CD8-positive, alpha-beta memory T cell (primary cell): ENCODE measurements at regions of chr1 and their contacts with region 1.

Region 1: DNA sequence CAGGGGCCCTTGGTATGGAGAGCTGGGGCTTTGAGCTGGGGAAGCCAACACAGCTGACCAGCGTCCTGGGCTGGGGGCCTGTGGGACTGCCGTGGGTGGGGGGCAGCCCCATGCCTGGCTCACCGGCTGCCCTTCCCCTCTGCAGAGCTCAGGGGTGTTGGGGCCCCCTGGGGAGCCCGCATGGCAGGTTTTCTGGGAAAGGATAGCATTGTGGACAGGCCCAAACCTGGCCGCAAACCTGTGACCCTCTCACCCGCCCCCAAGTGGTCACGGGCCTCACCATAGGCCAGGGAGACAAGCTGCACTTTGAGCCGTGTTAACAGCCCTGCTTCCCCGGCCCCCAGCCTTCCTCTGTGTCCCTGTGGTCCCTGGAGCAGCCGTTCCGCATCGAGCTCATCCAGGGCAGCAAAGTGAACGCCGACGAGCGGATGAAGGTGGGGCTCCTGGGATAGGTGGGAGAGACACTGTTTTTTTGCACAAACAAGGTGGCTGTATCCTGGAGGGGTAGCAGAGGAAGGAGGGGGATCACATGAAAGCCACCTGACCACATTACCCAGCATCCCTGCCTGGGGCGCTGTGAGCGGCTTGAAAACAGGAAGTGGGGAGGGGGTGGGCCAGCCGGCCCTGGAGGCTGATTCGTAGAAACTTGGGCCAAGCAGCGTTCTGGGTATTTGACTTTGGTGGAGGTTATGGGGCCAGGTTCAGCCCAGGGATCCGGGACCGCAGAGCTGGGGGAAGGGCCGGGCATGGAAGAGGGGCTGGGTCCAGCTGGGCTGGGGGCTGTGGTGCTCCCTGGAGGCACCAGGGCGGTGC is 65.9 kb downstream of the PIK3CD start:
- DNase-seq: peak; percentile 80 to 95 (median 91)
- H3K4me3 ChIP-seq: peak overlapping the region; percentile 89
- H3K4me3 Mint-ChIP-seq: peak overlapping the region; percentile 90 to 98 (median 95)
- H3K27ac ChIP-seq: peak overlapping the region; percentile 81
- H3K27ac Mint-ChIP-seq: peak overlapping the region; percentile 88 to 98 (median 94)
- H3K4me1 ChIP-seq: peaks cover 92% of the 10 kb centered on the region
- H3K4me1 Mint-ChIP-seq: peaks cover 37 to 79% (median 43%) of the 10 kb centered on the region in 3 donors
- H3K27me3 ChIP-seq: no peaks in the 10 kb centered on the region
- H3K27me3 Mint-ChIP-seq: peaks cover 0 to 3% of the 10 kb centered on the region in 2 donors

Region 2: DNA sequence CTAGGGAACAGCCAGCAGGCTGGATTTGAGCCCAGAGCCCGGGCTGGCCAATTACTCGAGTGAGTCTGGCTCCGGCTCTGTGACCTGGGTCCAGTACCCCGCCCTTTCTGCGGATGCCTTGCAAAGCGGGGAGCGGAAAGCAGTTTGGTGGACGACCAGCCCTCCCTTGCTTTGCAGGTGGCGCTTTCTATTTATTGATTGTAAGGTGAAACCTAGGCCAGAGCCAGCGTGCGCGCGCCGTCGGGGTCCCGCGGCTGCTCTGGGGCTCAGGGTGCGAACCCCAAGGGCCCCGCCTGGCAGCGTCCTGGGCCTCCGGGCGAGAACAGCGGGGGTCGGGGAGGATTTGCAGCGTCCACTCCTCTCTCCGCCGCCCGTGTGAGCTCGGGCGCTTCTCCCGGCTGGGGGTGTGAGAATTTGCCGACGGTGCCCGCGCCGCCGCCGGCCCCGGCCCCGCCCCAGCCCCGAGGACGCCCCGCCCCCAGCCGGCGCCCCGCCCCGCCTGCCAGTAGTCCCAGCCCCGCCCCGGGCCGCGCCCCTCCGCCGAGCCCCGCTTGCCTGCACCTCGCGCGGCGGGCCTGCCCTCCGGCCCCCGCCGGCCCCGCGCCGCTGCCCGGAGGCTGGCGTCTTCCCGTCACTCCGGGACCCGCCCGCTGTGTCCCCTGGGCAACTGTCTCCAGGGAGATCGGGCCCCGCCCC is 28.2 kb before region 1 on chr1:
- CTCF ChIA-PET with region 1: interaction called, 21 read pairs
- POLR2A ChIA-PET with region 1: interaction called, 7 read pairs
- DNase-seq: peak; percentile 77 to 88 (median 80)
- H3K4me3 ChIP-seq: peak overlapping the region; percentile 81
- H3K4me3 Mint-ChIP-seq: peak overlapping the region; percentile 77 to 92 (median 82)
- H3K27ac ChIP-seq: peak overlapping the region; percentile 51
- H3K27ac Mint-ChIP-seq: peak overlapping the region in 6 of 8 donors; percentile 42 to 95 (median 88)
- H3K4me1 ChIP-seq: peaks cover 64% of the 10 kb centered on the region
- H3K4me1 Mint-ChIP-seq: peaks cover 61 to 80% (median 76%) of the 10 kb centered on the region in 3 donors
- H3K27me3 ChIP-seq: no peaks in the 10 kb centered on the region
- H3K27me3 Mint-ChIP-seq: no peaks in the 10 kb centered on the region

Region 3: GRCh38 chr1:9737671-9738070 is 20.3 kb after region 1 on chr1:
- CTCF ChIA-PET with region 1: no interaction called
- POLR2A ChIA-PET with region 1: no interaction called
- DNase-seq: no peak
- H3K4me3 ChIP-seq: no peak overlapping the region
- H3K4me3 Mint-ChIP-seq: no peak overlapping the region
- H3K27ac ChIP-seq: no peak overlapping the region
- H3K27ac Mint-ChIP-seq: peak overlapping the region in 5 of 8 donors; percentile 17 to 83 (median 63)
- H3K4me1 ChIP-seq: peaks cover 16% of the 10 kb centered on the region
- H3K4me1 Mint-ChIP-seq: peaks cover 11 to 15% (median 14%) of the 10 kb centered on the region in 3 donors
- H3K27me3 ChIP-seq: no peaks in the 10 kb centered on the region
- H3K27me3 Mint-ChIP-seq: no peaks in the 10 kb centered on the region